Activated CD4-positive, alpha-beta memory T cell treated with anti-CD3 and anti-CD28 coated beads for 36 hours (primary cell): ENCODE measurements at regions of chr6 and their contacts with region 1.

Region 1: DNA sequence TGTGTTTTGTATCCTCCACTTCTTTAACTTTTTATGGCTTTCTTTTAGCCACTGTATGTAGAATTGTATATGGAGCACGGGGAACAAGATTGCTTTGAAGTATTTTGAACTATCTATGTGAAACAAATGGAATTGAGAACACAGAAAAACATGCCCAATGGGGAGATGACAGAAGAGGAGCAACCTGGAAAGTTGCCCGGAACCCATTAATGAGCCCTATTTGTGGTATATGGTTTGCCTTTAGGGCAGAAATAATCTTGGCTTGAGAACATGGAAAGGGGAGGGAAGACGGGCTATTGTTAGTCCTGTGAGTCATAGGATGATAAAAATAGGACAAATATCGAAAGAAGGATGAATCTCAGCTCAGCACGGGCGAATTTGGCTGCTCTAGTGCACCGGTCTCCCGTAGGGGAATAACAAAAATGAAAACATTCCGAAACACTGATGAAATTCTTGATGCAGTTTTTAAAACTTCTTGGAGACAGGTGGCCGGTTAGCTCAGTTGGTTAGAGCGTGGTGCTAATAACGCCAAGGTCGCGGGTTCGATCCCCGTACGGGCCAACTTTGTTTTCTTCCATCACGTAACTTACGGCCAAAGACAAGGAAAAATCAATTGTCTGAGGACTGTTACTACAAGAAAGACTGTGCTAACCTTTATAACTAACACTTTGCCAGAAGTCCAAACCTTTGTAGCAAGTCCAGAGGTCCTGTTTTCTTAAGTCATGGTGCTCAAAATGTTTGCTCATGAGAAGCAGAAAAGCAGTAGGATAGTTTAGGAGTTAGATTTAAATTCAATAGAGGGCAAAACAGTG is 15.7 kb downstream of the HMGN4 start:
- DNase-seq: peak; percentile 89
- H3K4me3 Mint-ChIP-seq: no peak overlapping the region
- H3K27ac Mint-ChIP-seq: no peak overlapping the region
- H3K4me1 Mint-ChIP-seq: peaks cover 23% of the 10 kb centered on the region
- H3K27me3 Mint-ChIP-seq: no peaks in the 10 kb centered on the region

Region 2: GRCh38 chr6:25962149-25963127 is 591.4 kb before region 1 on chr6 and contains the start of gene TRIM38:
- CTCF ChIA-PET with region 1: no interaction called
- POLR2A ChIA-PET with region 1: no interaction called
- intact Hi-C with region 1: no loop called
- DNase-seq: peak; percentile 83
- H3K4me3 Mint-ChIP-seq: peak within 1 kb of the TSS; percentile 98
- H3K27ac Mint-ChIP-seq: peak within 1 kb of the TSS; percentile 100
- H3K4me1 Mint-ChIP-seq: peaks cover 77% of the 10 kb centered on the region
- H3K27me3 Mint-ChIP-seq: no peaks in the 10 kb centered on the region
- total RNA-seq, gene TRIM38: 29.5 to 30.8 TPM

Region 3: DNA sequence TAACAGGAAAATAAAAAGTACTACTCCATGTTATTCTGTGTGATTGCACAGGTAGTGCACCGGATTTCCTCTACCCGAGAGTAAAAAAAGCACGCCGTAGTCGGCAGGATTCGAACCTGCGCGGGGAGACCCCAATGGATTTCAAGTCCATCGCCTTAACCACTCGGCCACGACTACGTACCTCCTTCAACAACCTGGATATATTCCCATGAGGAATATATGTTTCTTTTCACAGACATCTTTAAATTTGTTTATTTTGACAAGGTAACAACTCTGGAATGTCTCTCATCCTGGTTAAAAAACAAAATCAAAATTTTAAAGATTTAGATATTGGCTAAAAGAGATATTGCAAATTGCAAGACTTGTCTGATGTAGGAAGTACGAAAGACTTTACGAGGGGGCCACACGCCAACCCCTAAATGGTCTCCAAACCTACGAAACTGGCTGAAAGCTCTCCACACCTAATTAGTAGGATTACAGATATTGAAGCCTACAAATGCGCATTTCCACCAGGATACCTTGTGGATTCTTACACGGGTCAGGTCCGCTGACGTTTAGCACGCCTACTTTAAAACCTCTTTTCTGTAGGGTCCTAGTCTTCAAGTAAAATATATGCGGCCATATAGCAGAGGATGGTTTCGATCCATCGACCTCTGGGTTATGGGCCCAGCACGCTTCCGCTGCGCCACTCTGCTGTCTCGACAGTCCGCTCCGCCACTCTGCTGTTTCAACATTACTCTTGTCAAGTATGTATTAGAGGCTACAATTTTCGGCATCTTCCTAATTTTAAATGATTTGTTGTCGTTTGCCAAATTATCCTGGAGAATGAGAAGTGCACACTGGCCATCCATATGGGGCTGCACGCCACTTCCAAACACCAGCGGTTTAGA is 241.1 kb before region 1 on chr6:
- CTCF ChIA-PET with region 1: no interaction called
- POLR2A ChIA-PET with region 1: interaction called, 3 read pairs
- intact Hi-C with region 1: loop called (anchors 1 kb)
- DNase-seq: peak; percentile 89
- H3K4me3 Mint-ChIP-seq: peak overlapping the region; percentile 85
- H3K27ac Mint-ChIP-seq: peak overlapping the region; percentile 82
- H3K4me1 Mint-ChIP-seq: peaks cover 42% of the 10 kb centered on the region
- H3K27me3 Mint-ChIP-seq: peaks cover 7% of the 10 kb centered on the region

Region 4: GRCh38 chr6:26342106-26343004 is 211.5 kb before region 1 on chr6:
- CTCF ChIA-PET with region 1: interaction called, 10 read pairs
- POLR2A ChIA-PET with region 1: no interaction called
- intact Hi-C with region 1: no loop called
- DNase-seq: peak; percentile 65
- H3K4me3 Mint-ChIP-seq: peak overlapping the region; percentile 76
- H3K27ac Mint-ChIP-seq: peak overlapping the region; percentile 69
- H3K4me1 Mint-ChIP-seq: peaks cover 8% of the 10 kb centered on the region
- H3K27me3 Mint-ChIP-seq: peaks cover 5% of the 10 kb centered on the region

Region 5: DNA sequence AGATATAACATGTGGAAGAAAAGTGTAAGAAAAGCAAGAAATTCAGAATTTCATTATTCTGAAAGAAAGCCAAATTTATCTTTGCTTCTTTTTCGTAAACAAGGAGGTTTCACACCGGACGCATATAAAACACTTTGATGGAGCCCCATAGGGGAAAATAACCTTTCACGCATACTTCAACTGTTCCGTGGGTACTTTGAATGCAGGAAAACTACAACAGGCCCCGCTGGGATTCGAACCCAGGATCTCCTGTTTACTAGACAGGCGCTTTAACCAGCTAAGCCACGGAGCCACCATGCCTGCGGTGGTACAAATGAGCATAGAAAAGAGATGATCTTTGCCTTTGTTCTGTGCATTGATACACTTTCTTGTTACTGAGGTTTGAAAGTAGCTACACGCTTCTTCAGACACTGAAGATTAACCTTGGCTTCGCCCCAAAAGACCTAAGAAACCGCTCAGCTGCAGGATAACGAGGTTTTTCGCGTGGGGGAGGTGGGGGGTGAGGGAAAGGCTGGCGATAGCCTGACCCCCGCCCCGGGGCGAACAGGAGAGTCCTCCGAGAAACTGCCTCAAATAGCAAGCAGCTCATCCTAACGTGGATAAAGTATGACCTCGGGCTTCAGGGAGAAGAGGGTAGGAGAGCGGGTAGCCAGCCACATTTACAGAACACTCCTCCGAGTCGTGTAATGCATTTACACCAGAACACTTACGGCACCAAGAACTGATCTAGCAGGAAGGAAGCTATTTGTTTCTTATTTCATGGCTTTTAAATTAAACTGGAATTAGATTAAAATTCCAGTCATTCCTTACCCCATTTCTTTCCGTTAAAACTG is 20.9 kb before region 1 on chr6:
- CTCF ChIA-PET with region 1: interaction called, 16 read pairs
- POLR2A ChIA-PET with region 1: interaction called, 8 read pairs
- intact Hi-C with region 1: loop called (anchors 1 kb)
- DNase-seq: peak; percentile 95
- H3K4me3 Mint-ChIP-seq: peak overlapping the region; percentile 92
- H3K27ac Mint-ChIP-seq: peak overlapping the region; percentile 92
- H3K4me1 Mint-ChIP-seq: peaks cover 44% of the 10 kb centered on the region
- H3K27me3 Mint-ChIP-seq: peaks cover 2% of the 10 kb centered on the region

Region 6: DNA sequence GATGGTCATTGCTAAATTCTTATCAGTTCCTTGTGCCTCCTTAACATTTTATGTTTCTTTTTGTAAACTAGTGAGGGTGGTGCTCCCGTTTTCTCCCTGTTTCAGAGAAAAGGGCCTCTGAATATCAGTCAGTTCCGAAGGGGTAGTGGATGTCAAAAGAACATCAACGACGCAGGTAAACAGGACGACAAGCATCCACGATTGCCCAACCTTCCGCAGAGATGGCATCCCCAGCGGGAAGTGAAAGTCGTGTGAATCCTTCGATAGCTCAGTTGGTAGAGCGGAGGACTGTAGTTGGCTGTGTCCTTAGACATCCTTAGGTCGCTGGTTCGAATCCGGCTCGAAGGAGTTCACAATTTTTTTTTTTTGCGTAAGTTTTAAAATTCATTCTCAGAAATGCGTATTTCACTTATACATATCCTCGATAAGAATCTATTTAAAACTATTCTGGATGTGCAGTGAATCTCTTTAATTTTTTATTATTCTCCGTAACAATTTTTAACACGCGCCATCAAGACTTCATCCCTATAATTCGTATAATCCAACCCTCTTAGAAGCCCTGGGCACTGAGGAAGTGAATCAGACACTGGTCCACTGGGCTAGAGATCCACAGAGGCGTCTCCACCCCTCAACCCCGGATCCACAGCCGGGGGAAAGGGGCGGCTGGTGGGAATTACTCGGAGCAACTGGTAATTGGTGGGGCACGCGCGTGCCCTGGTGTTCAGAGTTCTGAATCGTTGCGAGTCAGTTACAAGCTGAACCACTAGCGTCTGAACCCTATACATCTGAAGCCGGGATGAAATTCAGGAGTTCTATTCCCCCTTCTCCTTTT is 15.0 kb after region 1 on chr6:
- CTCF ChIA-PET with region 1: interaction called, 11 read pairs
- POLR2A ChIA-PET with region 1: interaction called, 3 read pairs
- intact Hi-C with region 1: loop called (anchors 1 kb)
- DNase-seq: peak; percentile 99
- H3K4me3 Mint-ChIP-seq: peak overlapping the region; percentile 87
- H3K27ac Mint-ChIP-seq: peak overlapping the region; percentile 90
- H3K4me1 Mint-ChIP-seq: peaks cover 26% of the 10 kb centered on the region
- H3K27me3 Mint-ChIP-seq: peaks cover 4% of the 10 kb centered on the region